ENCODE measurements at regions of chr6 and their contacts with region 1.

Region 1: GRCh38 chr6:47047479-47048407 is 5.6 kb upstream of the ADGRF1 start:
- DNase-seq: peak; percentile 94
- H3K4me3 ChIP-seq: no peak overlapping the region
- H3K27ac ChIP-seq: peak overlapping the region; percentile 86
- H3K4me1 ChIP-seq: peaks cover 46% of the 10 kb centered on the region
- H3K27me3 ChIP-seq: no peaks in the 10 kb centered on the region
- CTCF ChIP-seq: peak; percentile 73 to 83
- POLR2A ChIP-seq: no peak

Region 2: DNA sequence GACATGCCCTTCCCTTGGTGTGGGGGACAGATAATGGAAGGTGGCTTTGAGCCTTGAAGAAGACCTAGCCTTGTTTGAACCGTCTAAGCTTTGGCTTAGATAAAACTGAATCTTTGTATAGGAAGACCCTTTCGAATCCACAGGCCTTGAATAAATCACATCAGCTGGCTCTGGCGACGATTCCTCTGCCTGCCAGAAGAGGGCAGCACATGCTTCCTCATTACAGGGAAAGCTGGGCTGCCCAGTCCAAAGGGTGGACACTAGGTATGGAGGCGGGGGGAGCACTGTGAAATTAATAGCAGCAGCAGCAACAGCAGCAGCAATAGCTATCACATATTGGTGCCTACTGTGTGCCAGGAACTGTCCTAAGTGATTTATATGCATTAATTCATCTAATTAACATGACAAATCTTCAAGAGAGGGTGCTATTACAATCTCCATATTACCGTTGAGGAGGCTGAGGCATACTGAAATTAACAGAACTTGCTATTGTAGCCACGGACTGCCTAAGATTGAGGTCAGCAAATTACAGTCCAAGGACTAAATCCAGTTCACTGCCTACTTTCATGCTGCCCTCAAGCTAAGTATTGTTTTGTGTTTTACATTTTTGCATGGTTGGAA is 1117.2 kb before region 1 on chr6:
- CTCF ChIA-PET with region 1: no interaction called
- POLR2A ChIA-PET with region 1: no interaction called
- dilution Hi-C with region 1: no loop called
- intact Hi-C with region 1: loop called (anchors 5 kb)
- DNase-seq: peak; percentile 67
- H3K4me3 ChIP-seq: no peak overlapping the region
- H3K27ac ChIP-seq: no peak overlapping the region
- H3K4me1 ChIP-seq: no peaks in the 10 kb centered on the region
- H3K27me3 ChIP-seq: peaks cover 0 to 3% of the 10 kb centered on the region in 2 experiments
- CTCF ChIP-seq: peak; percentile 92 to 94
- POLR2A ChIP-seq: no peak

Region 3: DNA sequence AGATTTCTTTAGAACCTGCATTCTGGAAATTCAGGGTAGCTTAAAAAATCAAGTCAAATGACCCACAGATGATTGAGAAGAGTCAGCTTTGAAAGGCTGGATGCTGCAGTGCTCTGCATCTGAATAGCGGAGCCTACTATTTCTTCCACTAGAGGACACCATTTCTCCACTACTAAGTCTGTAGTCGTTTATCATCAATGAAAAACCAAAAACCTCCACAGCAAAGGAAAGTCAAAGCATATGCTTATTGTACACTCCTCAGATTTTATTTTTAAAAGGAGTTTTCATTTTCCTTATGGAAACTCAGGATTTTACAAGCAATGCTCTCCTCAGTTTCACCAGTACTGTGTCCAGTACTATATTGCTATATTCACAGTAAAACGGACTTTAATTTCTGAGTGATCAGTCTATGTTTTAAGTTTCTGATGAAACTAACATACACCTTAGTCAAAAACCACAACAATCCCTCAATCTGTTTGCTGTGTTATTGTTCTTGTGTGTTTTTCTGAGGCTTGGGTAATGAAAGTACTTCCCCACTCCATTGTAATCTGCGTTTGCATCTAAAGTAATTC is 826.4 kb before region 1 on chr6:
- CTCF ChIA-PET with region 1: no interaction called
- POLR2A ChIA-PET with region 1: no interaction called
- dilution Hi-C with region 1: no loop called
- intact Hi-C with region 1: loop called (anchors 1 kb)
- DNase-seq: peak; percentile 43
- H3K4me3 ChIP-seq: no peak overlapping the region
- H3K27ac ChIP-seq: no peak overlapping the region
- H3K4me1 ChIP-seq: no peaks in the 10 kb centered on the region
- H3K27me3 ChIP-seq: peaks cover 3 to 13% of the 10 kb centered on the region in 2 experiments
- CTCF ChIP-seq: peak; percentile 58 to 73
- POLR2A ChIP-seq: no peak

Region 4: DNA sequence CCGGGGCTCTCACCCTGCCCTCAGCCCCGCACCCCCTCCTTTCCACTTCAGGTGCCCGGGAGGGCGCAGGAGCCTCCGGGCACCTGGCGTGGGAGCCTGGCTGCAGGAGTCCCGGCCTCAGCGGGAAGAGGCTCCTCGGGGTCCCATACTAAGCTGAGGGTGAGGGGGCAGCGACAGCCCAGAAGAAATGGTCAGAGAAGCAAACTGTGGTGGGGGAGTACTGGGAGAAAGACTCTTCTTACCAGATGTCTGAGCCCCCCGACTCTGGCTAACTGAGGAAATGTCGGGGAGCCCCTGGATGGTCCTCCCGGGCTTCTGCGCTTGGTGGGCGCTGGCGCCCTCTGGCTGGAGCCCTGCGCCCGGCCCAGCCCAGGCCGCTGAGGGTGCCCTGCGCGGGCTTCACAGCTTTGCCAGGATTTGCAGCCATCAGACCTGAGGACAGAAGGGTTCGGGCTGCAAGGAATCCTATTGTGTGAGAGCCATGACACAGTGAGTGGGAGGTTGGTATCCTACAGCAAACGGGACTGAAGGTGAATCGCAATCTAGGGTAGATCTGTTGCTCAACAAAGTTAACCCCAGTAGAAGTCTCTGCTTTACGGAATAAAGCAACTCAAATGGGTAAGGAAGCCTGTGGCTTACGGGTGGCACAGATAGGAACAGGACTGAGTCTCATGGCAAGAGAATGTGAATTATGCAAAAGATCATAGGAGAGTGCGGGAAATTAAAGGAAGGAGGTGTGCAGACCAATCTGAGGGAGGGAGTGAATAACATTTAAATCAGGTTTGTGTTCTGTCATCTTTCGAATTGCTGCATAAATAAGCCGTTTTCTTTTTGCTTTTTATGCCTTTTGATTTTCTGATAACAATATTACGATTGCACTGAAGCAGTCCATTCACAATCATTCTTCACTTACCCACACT is 555.9 kb before region 1 on chr6:
- CTCF ChIA-PET with region 1: no interaction called
- POLR2A ChIA-PET with region 1: no interaction called
- dilution Hi-C with region 1: no loop called
- intact Hi-C with region 1: loop called (anchors 5 kb)
- DNase-seq: peak; percentile 12
- H3K4me3 ChIP-seq: peak overlapping the region; percentile 14 to 42 (median 40)
- H3K27ac ChIP-seq: no peak overlapping the region
- H3K4me1 ChIP-seq: peaks cover 8% of the 10 kb centered on the region
- H3K27me3 ChIP-seq: peaks cover 29 to 50% of the 10 kb centered on the region in 2 experiments
- CTCF ChIP-seq: peak; percentile 27 to 42
- POLR2A ChIP-seq: no peak

Region 5: DNA sequence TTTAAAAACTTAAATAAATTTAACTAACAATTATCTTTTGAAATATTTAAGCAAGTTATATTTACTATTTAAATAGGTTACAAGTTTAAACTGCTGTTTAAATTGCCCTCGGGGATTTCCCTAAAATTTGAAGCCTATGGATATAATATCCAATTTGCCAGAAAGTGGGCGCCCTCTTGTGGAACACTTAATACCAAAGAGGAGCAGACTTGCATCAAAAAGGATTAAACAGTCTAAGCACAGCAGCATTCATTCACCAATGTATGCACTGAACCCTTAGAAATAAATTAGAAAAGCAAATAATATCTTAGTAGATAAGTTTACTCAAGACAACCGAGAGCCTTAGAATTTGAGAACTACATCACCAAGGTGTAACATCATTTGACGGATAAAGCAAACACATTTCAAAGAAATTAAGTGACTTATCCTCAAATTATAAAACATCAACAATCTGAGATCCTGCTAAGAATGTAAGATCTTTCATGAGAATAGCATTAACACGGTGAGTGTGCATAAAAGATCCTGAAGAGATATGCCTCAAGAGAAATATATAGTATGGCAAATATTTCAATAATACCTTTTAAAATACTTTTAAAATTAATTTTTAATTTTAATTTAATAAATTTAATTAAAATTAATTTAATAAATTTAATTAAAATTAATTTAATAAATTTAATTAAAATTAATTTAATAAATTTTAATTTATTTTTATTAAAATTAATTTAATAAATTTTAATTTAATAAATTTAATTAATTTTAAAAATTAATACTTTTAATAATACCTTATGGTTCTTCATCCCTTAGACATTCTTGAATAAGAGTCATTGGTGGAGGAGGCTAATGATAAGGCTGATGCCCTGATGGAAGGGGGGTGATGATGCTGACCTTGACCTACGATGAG is 266.0 kb before region 1 on chr6:
- CTCF ChIA-PET with region 1: no interaction called
- POLR2A ChIA-PET with region 1: no interaction called
- dilution Hi-C with region 1: no loop called
- intact Hi-C with region 1: loop called (anchors 1 kb)
- DNase-seq: peak; percentile 63
- H3K4me3 ChIP-seq: no peak overlapping the region
- H3K27ac ChIP-seq: no peak overlapping the region
- H3K4me1 ChIP-seq: no peaks in the 10 kb centered on the region
- H3K27me3 ChIP-seq: peaks cover 0 to 4% of the 10 kb centered on the region in 2 experiments
- CTCF ChIP-seq: peak; percentile 50 to 60
- POLR2A ChIP-seq: no peak

Region 6: DNA sequence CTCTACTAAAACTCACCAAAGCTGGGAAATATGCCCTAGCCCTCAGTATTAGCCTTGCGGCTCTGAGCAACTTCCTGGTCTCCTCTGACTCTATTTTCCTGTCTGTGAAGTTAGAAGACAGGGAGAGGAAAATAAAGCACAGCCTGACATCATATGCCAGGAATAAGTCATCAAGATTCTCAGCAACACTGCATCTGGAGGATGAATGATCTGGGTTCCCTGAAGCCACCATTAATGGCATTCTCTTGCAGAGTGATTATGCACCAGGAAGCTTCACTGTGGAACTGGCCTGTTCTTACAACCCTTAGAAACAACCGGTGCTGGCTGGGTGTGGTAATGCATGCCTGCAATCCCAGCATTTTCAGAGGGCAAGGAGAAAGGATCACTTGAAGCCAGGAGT is 138.4 kb before region 1 on chr6:
- CTCF ChIA-PET with region 1: interaction called, 6 read pairs
- POLR2A ChIA-PET with region 1: no interaction called
- dilution Hi-C with region 1: no loop called
- intact Hi-C with region 1: loop called (anchors 2 kb)
- DNase-seq: peak; percentile 93
- H3K4me3 ChIP-seq: no peak overlapping the region
- H3K27ac ChIP-seq: peak overlapping the region; percentile 88
- H3K4me1 ChIP-seq: peaks cover 32% of the 10 kb centered on the region
- H3K27me3 ChIP-seq: no peaks in the 10 kb centered on the region
- CTCF ChIP-seq: peak in 1 of 2 donors; percentile 3
- POLR2A ChIP-seq: no peak

Region 7: GRCh38 chr6:47034919-47035318 is 12.8 kb before region 1 on chr6:
- CTCF ChIA-PET with region 1: interaction called, 49 read pairs
- POLR2A ChIA-PET with region 1: interaction called, 9 read pairs
- dilution Hi-C with region 1: no loop called
- intact Hi-C with region 1: no loop called
- DNase-seq: peak; percentile 85
- H3K4me3 ChIP-seq: no peak overlapping the region
- H3K27ac ChIP-seq: no peak overlapping the region
- H3K4me1 ChIP-seq: peaks cover 9% of the 10 kb centered on the region
- H3K27me3 ChIP-seq: peaks cover 0 to 2% of the 10 kb centered on the region in 2 experiments
- CTCF ChIP-seq: no peak
- POLR2A ChIP-seq: no peak

Measured in endothelial cell of umbilical vein (primary cell).